A673 (cell line): ENCODE measurements at regions of chr4 and their contacts with region 1.

Region 1: DNA sequence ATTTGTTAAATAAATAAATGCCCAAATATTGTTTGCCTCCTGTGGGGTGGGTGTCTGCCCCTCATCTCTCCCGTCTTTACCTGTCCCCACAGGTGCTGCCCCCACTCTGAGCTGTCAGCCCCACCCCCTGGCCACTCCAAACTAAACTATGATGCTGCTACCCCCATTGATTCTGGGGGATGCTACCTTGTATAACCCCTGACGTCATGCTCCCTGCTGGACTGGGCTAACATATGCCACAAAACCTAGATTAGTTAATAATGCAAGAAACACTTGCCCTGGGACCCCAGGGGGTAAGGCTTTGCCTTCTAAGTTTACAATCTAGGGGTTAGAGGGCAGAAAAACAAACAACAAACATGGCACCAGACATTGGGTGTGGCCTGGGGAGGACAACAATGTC is 58.6 kb downstream of the MSX1 start:
- DNase-seq: no peak
- H3K4me3 ChIP-seq: no peak overlapping the region
- H3K27ac ChIP-seq: no peak overlapping the region
- H3K4me1 ChIP-seq: no peaks in the 10 kb centered on the region
- H3K27me3 ChIP-seq: no peaks in the 10 kb centered on the region
- CTCF ChIP-seq: no peak

Region 2: DNA sequence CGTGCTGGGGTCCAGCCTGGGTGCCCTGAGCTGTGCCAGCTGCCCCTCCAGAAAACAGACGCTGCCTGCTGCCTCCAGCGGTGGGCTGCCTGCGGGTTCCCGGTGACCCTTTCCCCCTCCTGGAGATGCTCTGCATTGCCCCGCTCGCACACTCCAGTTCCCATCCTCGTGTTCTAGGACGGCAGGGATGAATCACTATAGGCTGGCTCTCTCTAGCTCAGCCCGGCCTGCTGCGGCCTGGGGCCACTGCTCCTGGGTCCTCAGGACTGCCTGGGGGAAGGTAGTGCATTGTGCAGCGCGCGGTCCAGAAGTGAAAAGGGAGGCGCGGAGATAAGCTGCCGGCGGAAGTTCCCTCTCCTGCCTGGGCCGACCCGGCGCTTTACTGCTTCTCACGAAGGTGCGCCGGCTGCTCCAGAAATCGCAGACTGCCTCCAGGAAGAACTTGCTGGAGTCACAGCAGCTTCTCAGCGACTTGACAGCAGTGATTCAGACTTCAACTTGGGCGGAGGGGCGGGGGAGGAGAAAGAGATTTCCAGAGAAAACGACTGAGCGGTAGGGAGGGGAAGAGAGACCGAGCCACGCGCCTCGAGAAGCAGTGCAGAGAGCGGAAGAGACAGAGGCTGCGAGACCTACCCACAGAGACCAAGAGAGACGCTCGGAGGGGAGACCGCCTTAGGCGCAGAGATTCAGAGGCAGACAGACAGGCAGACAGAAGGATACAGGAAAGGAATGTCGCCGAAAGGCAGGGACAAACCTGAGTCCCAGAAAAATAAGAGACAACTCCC is 65.3 kb before region 1 on chr4:
- CTCF ChIA-PET with region 1: no interaction called
- POLR2A ChIA-PET with region 1: interaction called, 16 read pairs
- intact Hi-C with region 1: no loop called
- DNase-seq: peak; percentile 54
- H3K4me3 ChIP-seq: peak overlapping the region; percentile 38
- H3K27ac ChIP-seq: no peak overlapping the region
- H3K4me1 ChIP-seq: no peaks in the 10 kb centered on the region
- H3K27me3 ChIP-seq: peaks cover 32% of the 10 kb centered on the region
- CTCF ChIP-seq: 0 out of 2 replicates have a peak, but pooled peaks have one; percentile 12